HCT116 (cell line): ENCODE measurements at regions of chr14 and their contacts with region 1.

Region 1: DNA sequence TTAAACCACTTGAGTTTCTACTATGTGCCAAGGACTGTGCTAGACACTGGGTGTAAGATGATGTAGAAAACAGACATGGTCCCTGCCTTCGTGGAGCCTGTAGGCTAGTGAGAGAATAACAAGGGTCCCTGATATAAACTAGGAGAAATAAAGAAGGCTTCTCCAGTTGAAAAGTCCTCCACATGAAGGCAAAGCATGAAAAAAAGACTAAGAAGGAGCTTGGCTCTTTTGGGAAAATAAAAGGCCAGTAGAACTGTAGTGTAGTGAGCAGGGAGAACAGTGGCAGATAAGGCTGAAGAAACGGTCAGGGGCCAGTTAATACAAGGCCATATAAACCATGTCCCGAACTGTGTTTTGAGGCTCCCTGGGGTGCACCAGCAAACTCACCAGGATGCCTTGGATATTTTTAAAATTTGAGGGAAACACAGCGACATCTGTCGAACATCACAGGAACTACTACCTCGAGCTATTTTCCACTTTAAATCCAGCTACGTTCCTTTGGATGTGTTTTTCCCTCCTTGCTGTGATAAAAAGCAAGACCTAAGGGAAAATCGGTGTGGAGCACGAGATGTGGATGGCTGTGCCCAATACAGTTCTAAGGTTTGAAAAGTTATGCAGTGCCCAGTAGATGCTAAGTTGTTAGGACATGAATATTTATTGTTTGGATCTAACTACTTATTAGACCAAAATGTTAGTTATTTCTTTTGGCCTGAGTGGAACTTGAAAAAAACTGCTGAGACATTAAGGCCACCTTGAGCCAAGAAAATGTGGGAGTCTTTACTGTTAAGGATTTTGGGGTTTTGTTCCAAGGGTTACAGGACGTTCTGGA is 8.5 kb upstream of the CFL2 start:
- DNase-seq: peak; percentile 61
- ATAC-seq: peak; percentile 81
- H3K4me3 ChIP-seq: no peak overlapping the region
- H3K27ac ChIP-seq: peak overlapping the region; percentile 17; the same call in 1 of the 2 replicates
- H3K4me1 ChIP-seq: peaks cover 8 to 15% of the 10 kb centered on the region in 2 experiments; a peak in 3 of 4 replicates
- H3K27me3 ChIP-seq: no peaks in the 10 kb centered on the region
- CTCF ChIP-seq: peak; percentile 57 to 72 (median 68); a peak in 5 of 6 replicates
- POLR2A ChIP-seq: no peak
- RAD21 ChIP-seq: peak; percentile 75

Region 2: GRCh38 chr14:34507459-34507858 is 215.5 kb before region 1 on chr14:
- CTCF ChIA-PET with region 1: no interaction called
- POLR2A ChIA-PET with region 1: no interaction called
- RAD21 ChIA-PET with region 1: no interaction called
- intact Hi-C with region 1: no loop called
- DNase-seq: no peak
- ATAC-seq: no peak
- H3K4me3 ChIP-seq: no peak overlapping the region
- H3K27ac ChIP-seq: no peak overlapping the region
- H3K4me1 ChIP-seq: no peaks in the 10 kb centered on the region
- H3K27me3 ChIP-seq: no peaks in the 10 kb centered on the region
- CTCF ChIP-seq: no peak
- POLR2A ChIP-seq: no peak
- RAD21 ChIP-seq: no peak

Region 3: DNA sequence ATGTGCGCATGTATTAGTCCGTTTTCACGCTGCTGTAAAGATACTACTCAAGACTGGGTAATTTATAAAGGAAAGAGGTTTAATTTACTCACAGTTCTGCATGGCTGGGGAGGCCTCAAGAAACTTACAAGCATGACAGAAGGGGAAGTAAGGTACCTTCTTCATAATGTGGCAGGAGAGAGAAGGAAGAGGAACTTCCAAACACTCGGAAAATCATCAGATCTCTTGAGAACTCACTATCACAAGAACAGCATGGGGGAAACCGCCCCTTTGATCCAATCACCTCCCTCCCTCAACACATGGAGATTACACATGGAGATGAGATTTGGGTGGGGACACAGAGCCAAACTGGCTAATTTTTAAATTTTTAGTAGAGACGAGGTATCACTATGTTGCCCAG is 51.2 kb before region 1 on chr14:
- CTCF ChIA-PET with region 1: interaction called, 9 read pairs
- POLR2A ChIA-PET with region 1: no interaction called
- RAD21 ChIA-PET with region 1: interaction called in 1 of 2 experiments, 3 read pairs
- intact Hi-C with region 1: loop called (anchors 2 kb)
- DNase-seq: no peak
- ATAC-seq: no peak
- H3K4me3 ChIP-seq: no peak overlapping the region
- H3K27ac ChIP-seq: no peak overlapping the region
- H3K4me1 ChIP-seq: no peaks in the 10 kb centered on the region
- H3K27me3 ChIP-seq: no peaks in the 10 kb centered on the region
- CTCF ChIP-seq: no peak
- POLR2A ChIP-seq: no peak
- RAD21 ChIP-seq: no peak

Region 4: DNA sequence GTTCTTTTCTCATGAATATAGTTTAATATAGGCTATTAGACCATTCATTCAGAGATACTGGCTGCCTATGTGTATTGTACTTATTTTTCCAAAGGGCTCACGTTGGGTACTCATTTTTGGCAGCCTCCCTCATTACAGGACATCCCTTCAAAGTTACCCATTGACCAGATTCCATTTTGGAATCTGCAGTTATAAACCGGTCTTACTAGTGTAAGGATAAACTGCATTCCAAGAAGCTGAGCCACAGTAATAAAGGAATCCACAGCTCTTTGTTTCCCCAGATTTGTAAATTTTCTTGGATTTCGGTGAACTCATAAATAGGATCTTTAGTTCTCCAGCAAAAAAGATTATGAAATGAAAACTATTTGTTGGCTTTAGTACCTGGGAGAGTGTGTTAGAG is 10.3 kb after region 1 on chr14:
- CTCF ChIA-PET with region 1: interaction called, 36 read pairs
- POLR2A ChIA-PET with region 1: interaction called, 4 read pairs
- RAD21 ChIA-PET with region 1: no interaction called
- intact Hi-C with region 1: no loop called
- DNase-seq: peak; percentile 38
- ATAC-seq: peak; percentile 87
- H3K4me3 ChIP-seq: peak overlapping the region in 1 of 2 experiments; percentile 12; a peak in 2 of 4 replicates
- H3K27ac ChIP-seq: peak overlapping the region; percentile 32; the same call in 1 of the 2 replicates
- H3K4me1 ChIP-seq: peaks cover 18 to 21% of the 10 kb centered on the region in 2 experiments
- H3K27me3 ChIP-seq: no peaks in the 10 kb centered on the region
- CTCF ChIP-seq: no peak
- POLR2A ChIP-seq: no peak
- RAD21 ChIP-seq: no peak